ENCODE measurements at regions of chr11 and their contacts with region 1.

Region 1: DNA sequence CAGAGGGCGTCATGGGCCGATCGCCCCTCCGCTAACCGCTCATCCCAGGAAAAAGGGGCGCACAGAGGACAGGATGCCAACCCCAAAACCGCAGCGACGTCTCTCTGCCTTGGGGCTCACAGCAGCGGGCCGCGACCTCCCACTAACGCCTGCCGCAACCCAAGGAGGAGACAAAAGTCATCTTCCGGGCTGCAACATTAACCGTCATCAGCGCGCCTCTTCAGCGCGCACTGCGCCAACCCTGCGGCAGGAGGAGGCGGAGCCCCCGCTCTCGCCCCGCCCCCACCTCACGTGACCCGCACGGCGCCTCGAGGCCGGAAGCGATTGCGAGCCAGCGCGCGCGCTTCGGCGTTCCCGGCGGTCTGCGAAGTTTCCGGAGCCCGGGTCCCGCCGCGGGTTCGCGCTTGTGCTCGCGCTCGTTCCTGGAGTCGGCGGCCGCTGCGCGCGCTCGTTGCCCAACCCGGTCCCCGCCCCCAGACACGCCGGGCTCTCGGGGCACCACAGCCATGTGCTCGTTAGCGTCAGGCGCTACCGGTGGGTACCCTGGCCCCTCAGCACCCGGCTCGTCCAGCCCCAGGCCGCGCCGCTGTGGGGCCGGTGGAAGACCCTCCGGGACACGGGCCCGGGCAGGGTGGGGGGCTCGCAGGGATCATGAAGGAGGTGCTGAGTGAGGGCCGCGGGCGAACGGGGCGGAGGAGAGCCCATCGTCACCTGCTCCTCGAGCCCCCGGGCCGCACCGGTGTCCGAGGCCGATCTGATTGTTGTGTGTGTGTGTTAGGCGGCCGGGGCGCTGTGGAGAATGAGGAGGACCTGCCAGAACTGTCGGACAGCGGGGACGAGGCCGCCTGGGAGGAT is at the start of gene PRMT3:
- DNase-seq: peak; percentile 99
- H3K4me3 ChIP-seq: peak within 1 kb of the TSS; percentile 89 to 99 (median 96)
- H3K27ac ChIP-seq: peak within 1 kb of the TSS; percentile 86 to 95 (median 93)
- H3K4me1 ChIP-seq: peaks cover 15 to 27% (median 21%) of the 10 kb centered on the region in 4 donors
- H3K27me3 ChIP-seq: peaks cover 0 to 4% (median 0%) of the 10 kb centered on the region in 4 donors
- CTCF ChIP-seq: peak in 2 of 3 experiments; percentile 93 to 96
- EP300 ChIP-seq: no peak
- POLR2A ChIP-seq: no peak
- total RNA-seq, gene PRMT3: 11.3 to 19.9 (median 16.1) TPM

Region 2: GRCh38 chr11:20363500-20364411 is 23.7 kb before region 1 on chr11 and contains the start of gene HTATIP2:
- intact Hi-C with region 1: loop called (anchors 2 kb)
- DNase-seq: no peak
- H3K4me3 ChIP-seq: peak within 1 kb of the TSS; percentile 76 to 85 (median 79)
- H3K27ac ChIP-seq: peak within 1 kb of the TSS; percentile 80 to 89 (median 86)
- H3K4me1 ChIP-seq: peaks cover 19 to 57% (median 45%) of the 10 kb centered on the region in 4 donors
- H3K27me3 ChIP-seq: peaks cover 0 to 6% (median 0%) of the 10 kb centered on the region in 4 donors
- CTCF ChIP-seq: no peak
- EP300 ChIP-seq: no peak
- POLR2A ChIP-seq: peak; percentile 38
- total RNA-seq, gene HTATIP2: 30.2 to 54.7 (median 43.7) TPM

Region 3: GRCh38 chr11:20443596-20443995 is 56.1 kb after region 1 on chr11:
- intact Hi-C with region 1: no loop called
- DNase-seq: no peak
- H3K4me3 ChIP-seq: no peak overlapping the region
- H3K27ac ChIP-seq: no peak overlapping the region
- H3K4me1 ChIP-seq: no peaks in the 10 kb centered on the region
- H3K27me3 ChIP-seq: no peaks in the 10 kb centered on the region
- CTCF ChIP-seq: peak in 2 of 3 experiments; percentile 8 to 19
- EP300 ChIP-seq: no peak
- POLR2A ChIP-seq: no peak

Region 4: GRCh38 chr11:20609727-20610707 is 222.5 kb after region 1 on chr11:
- intact Hi-C with region 1: loop called (anchors 10 kb)
- DNase-seq: no peak
- H3K4me3 ChIP-seq: peak overlapping the region in 1 of 4 donors; percentile 12
- H3K27ac ChIP-seq: no peak overlapping the region
- H3K4me1 ChIP-seq: peaks cover 3 to 14% (median 9%) of the 10 kb centered on the region in 4 donors
- H3K27me3 ChIP-seq: peaks cover 0 to 89% (median 19%) of the 10 kb centered on the region in 4 donors
- CTCF ChIP-seq: peak; percentile 76 to 99 (median 84)
- EP300 ChIP-seq: no peak
- POLR2A ChIP-seq: no peak